Common myeloid progenitor, CD34-positive (primary cell): ENCODE measurements at regions of chr4 and their contacts with region 1.

Region 1: GRCh38 chr4:185183619-185184281 is 20.1 kb downstream of the CFAP97 start:
- DNase-seq: peak; percentile 90 to 96 (median 93)
- H3K4me3 ChIP-seq: no peak overlapping the region
- H3K27ac ChIP-seq: no peak overlapping the region
- H3K4me1 ChIP-seq: peaks cover 0 to 5% (median 3%) of the 10 kb centered on the region in 4 experiments
- H3K27me3 ChIP-seq: no peaks in the 10 kb centered on the region

Region 2: DNA sequence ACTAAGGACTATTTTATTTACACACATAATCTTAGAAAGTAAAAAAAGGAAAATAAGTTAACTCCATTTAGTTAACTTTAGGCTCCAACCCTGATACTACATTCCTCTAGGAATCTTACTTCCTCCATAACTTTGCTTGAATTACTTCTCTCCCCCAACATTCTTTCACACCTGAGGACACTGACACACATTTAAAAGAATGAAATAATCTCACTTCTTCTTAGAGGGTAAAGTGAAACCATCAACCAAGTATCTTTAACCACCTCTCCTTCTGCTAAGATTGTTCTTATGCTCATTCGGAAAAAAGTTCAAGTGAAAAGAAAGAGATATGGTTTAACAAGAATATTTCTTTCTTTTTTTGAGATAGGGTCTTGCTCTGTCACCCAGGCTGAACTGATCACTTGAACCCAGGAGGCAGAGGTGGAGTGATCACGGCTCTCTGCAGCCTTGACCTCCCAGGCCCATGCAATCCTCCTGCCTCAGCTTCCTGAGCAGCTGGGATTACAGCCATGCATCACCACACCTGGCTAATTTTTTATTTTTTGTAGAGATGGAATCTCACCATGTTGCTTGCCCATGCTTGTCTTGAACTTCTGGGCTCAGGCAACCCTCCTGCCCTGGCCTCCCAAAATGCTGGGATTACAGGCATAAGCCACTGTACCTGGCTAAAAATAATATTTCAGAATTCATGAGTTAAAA is 12.2 kb before region 1 on chr4:
- CTCF ChIA-PET with region 1: interaction called, 11 read pairs
- POLR2A ChIA-PET with region 1: no interaction called
- DNase-seq: no peak
- H3K4me3 ChIP-seq: no peak overlapping the region
- H3K27ac ChIP-seq: no peak overlapping the region
- H3K4me1 ChIP-seq: no peaks in the 10 kb centered on the region
- H3K27me3 ChIP-seq: no peaks in the 10 kb centered on the region

Region 3: DNA sequence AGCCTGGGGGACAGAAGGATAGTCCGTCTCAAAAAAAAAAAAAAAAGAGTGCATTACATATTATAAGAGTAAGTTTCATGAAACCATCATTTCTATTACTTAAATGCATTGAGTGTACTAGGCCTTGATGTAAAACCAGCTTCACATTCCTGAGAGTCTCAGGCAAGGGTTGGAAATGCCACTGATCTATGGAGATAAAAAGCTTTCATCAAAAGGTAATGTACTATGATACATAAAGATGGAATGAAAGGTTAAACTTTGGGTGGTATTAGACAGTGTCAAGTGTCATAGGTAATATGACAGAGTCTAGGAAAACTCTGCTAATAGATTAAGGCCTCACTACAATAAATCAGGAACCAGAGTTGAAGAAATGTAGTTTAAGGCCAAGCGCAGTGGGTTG is 12.7 kb after region 1 on chr4:
- CTCF ChIA-PET with region 1: interaction called, 27 read pairs
- POLR2A ChIA-PET with region 1: interaction called, 7 read pairs
- DNase-seq: no peak
- H3K4me3 ChIP-seq: no peak overlapping the region
- H3K27ac ChIP-seq: no peak overlapping the region
- H3K4me1 ChIP-seq: no peaks in the 10 kb centered on the region
- H3K27me3 ChIP-seq: no peaks in the 10 kb centered on the region